ENCODE measurements at regions of chr16 and their contacts with region 1.

Region 1: DNA sequence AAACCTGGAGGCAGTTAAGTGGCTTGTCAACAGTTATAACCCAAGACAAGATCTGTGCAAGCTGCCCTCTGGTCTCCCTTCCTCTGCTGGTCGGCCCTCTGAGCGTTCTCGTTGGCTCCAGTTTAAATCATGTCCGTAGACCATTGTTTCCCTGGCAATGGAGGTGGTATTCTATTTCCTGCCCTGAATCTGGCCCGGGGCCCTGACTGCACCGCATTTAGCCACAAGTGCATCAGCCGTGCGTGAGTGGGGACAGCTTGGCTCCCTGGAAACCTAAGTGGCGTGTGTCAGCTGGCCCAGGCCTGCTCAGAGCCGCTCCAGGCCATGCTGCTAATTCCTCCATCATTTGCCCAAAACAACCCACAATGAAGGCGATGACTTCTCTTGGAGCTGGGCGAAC is 15.0 kb upstream of the MYLK3 start:
- DNase-seq: peak; percentile 89
- ATAC-seq: peak; percentile 88

Region 2: GRCh38 chr16:46638947-46639925 is 123.9 kb before region 1 on chr16:
- intact Hi-C with region 1: no loop called
- DNase-seq: no peak
- ATAC-seq: peak; percentile 73

Region 3: DNA sequence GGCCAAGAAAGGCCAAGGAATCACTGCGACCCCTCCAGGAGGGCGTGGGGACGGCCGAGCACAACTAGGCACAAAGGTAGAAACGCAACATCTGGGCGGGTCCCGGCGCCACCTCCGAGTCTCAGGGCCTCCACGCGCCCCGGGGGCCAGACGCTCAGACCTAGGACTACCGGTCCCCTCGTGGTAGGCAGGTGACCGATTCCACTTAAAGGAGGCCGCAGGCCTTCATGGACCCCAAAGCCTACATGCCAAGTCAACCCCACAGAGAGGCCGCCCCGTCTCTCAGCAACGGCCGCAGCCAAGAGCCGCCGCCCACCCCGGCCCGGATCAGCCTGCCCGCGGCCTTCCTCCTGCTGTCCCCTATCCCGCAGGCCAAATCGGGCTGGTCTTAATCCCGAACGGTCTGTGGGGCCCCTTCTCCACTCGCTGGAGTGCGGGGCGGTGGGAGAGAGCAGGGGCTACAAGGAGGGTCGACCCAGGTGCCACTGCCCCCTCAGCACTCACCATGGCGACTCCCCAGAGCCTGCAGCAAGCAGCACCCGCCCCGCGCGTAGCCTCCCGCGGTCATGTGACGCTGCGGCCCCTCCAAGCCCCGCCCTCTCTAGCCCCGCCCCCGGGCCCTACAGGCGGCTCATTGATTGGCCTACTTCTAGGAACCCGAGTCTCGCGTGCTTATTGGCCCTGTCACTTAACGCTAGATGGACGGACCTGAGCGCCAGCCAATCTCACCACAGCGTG is 74.4 kb before region 1 on chr16 and contains the start of gene VPS35:
- intact Hi-C with region 1: no loop called
- DNase-seq: peak; percentile 100
- ATAC-seq: peak; percentile 98
- total RNA-seq, gene VPS35: 86.9 TPM

Region 4: DNA sequence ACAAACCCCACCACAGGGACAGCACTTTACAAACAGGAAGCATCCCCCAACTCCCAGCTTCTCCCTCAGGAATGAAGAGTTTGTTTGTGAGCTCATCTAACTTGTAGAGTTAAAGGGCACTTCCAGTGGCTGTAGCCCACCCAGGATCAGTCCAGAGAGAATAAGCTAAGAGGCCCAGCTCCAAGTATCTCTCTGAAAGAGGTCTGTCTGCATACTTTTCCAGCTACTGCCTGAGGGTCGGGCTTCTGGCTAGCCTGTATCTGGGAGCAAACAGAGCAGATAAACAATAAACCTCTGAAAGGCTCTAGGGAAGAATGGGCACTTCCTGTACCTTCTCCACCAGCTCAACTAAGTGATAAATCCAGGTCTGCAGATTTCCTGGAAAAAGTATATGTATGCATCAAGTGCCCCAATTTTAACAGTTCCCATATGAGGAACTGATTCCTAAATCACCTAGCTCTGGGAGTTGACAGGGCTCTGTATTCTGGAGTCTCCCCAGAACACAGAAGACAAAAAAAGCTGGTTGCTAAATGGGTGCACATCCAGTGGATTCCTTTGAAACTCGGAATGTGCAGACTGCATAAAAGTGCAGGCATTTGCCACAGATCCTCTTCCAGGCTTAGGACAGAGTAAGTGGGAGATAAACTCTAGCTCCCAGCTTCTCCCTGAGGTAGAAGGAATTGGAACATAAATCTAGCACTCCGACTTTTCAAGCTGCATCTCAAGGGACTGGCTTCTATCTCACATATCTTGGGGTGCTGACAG is 22.1 kb after region 1 on chr16:
- intact Hi-C with region 1: loop called (anchors 1 kb)
- DNase-seq: no peak
- ATAC-seq: no peak